HEK293 (cell line): ENCODE measurements at regions of chr22 and their contacts with region 1.

Region 1: DNA sequence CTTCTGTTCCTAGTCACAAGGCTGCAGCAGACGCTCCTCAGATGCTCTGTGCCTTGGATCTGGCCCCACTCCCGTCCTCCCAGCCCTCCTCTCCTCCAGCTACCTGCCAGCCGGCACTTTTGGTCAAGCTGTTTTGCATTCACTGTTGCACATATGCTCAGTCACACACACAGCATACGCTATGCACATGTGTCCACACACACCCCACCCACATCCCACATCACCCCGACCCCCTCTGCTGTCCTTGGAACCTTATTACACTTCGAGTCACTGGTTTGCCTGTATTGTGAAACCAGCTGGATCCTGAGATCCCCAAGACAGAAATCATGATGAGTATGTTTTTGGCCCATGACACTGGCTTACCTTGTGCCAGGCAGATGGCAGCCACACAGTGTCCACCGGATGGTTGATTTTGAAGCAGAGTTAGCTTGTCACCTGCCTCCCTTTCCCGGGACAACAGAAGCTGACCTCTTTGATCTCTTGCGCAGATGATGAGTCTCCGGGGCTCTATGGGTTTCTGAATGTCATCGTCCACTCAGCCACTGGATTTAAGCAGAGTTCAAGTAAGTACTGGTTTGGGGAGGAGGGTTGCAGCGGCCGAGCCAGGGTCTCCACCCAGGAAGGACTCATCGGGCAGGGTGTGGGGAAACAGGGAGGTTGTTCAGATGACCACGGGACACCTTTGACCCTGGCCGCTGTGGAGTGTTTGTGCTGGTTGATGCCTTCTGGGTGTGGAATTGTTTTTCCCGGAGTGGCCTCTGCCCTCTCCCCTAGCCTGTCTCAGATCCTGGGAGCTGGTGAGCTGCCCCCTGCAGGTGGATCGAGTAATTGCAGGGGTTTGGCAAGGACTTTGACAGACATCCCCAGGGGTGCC is 109.8 kb downstream of the BCR start:
- H3K4me3 ChIP-seq: no peak overlapping the region
- H3K27ac ChIP-seq: no peak overlapping the region
- H3K4me1 ChIP-seq: no peaks in the 10 kb centered on the region
- CTCF ChIP-seq: peak; percentile 59

Region 2: DNA sequence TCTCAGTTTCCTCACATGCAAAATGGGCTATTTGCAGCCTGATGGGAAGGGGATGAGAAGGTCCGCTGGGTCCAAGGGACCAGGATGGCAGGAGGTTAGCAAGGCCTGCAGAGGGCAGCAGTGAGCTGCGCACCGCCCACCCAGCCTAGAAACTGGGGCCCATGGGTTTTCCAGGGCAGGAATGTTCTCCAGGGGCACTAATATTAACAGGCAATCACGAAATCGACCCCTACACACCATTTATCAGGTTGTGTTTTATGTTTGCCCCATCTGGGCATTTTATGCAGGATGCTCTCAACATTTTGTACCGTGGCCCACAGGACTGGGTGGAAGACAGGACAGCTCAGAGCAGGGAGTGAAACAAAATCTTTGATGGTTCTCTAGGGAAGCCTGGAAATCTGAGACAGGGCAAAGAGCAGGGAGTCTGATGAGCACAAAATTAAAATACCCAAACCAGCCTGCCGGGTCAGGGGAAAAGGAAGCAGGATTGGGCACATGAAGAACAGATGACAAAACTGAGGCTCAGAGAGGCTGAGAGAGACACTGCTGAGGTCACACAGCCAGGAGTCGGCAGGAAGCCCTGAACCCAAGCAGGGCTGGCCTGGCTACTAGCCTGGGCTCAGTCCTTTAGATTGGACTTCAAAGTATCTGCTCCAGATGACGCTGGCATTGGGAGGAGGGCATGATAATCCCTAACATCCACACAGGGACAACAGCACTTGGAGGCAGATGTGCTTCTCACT is 111.4 kb before region 1 on chr22:
- CTCF ChIA-PET with region 1: interaction called, 207 read pairs
- POLR2A ChIA-PET with region 1: no interaction called
- H3K4me3 ChIP-seq: no peak overlapping the region
- H3K27ac ChIP-seq: no peak overlapping the region
- H3K4me1 ChIP-seq: no peaks in the 10 kb centered on the region
- CTCF ChIP-seq: peak; percentile 91

Region 3: GRCh38 chr22:23243006-23243573 is 47.0 kb before region 1 on chr22:
- CTCF ChIA-PET with region 1: interaction called, 11 read pairs
- POLR2A ChIA-PET with region 1: no interaction called
- H3K4me3 ChIP-seq: no peak overlapping the region
- H3K27ac ChIP-seq: no peak overlapping the region
- H3K4me1 ChIP-seq: no peaks in the 10 kb centered on the region
- CTCF ChIP-seq: no peak

Region 4: GRCh38 chr22:23376256-23376655 is 86.2 kb after region 1 on chr22:
- CTCF ChIA-PET with region 1: interaction called, 12 read pairs
- POLR2A ChIA-PET with region 1: no interaction called
- H3K4me3 ChIP-seq: no peak overlapping the region
- H3K27ac ChIP-seq: no peak overlapping the region
- H3K4me1 ChIP-seq: no peaks in the 10 kb centered on the region
- CTCF ChIP-seq: no peak

Region 5: GRCh38 chr22:23385291-23386244 is 95.5 kb after region 1 on chr22:
- CTCF ChIA-PET with region 1: interaction called, 11 read pairs
- POLR2A ChIA-PET with region 1: no interaction called
- H3K4me3 ChIP-seq: no peak overlapping the region
- H3K27ac ChIP-seq: no peak overlapping the region
- H3K4me1 ChIP-seq: no peaks in the 10 kb centered on the region
- CTCF ChIP-seq: peak; percentile 98